Dendritic cell treated with granulocyte-macrophage colony-stimulating factor and Interleukin-4, amounts not matched to agents 40 ng/mL and 50 ng/mL, for 4 days (primary cell): ENCODE measurements at regions of chr15 and their contacts with region 1.

Region 1: DNA sequence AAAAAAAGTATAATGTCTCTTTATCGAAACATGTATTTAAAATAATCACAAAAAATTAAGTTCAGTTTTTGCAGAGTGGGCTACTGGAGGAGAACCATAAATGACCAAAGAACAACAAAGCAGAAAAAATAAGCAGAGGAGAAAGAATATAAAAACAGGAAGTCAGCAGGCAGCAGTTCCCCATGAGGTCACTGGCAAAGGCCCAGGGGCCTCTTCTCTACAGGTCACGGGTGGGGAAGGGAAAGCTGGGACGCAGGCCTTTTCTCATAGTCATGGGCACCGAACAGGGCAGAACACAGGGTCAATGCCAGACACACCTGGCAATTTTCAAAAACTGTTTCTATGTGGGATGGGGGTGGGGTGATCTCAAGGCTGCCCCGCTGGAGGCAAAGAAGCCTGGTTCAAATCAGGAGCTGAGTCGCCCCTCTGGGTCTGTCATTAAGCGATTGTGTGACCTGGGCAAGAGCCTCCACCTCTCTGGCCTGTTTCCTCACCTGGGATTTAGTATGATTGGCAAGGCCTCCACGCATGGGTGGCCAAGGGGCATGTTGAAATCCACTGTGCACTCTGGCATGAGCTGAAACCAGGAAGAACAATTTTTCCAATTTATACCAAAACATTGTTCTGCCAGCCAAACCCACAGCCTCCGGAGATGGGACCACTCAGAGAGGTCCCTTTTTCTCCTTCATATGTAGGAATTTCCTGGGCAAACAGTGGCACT is 43.8 kb upstream of the UACA start:
- H3K4me3 Mint-ChIP-seq: no peak overlapping the region
- H3K27ac Mint-ChIP-seq: peak overlapping the region; percentile 20
- H3K4me1 Mint-ChIP-seq: peaks cover 19% of the 10 kb centered on the region
- H3K27me3 Mint-ChIP-seq: no peaks in the 10 kb centered on the region

Region 2: GRCh38 chr15:69475769-69476358 is 1331.3 kb before region 1 on chr15:
- intact Hi-C with region 1: loop called (anchors 5 kb)
- H3K4me3 Mint-ChIP-seq: no peak overlapping the region
- H3K27ac Mint-ChIP-seq: no peak overlapping the region
- H3K4me1 Mint-ChIP-seq: peaks cover 2% of the 10 kb centered on the region
- H3K27me3 Mint-ChIP-seq: peaks cover 21% of the 10 kb centered on the region

Region 3: GRCh38 chr15:70763120-70763878 is 43.9 kb before region 1 on chr15 and contains the start of gene UACA:
- intact Hi-C with region 1: loop called (anchors 5 kb)
- H3K4me3 Mint-ChIP-seq: peak within 1 kb of the TSS; percentile 94
- H3K27ac Mint-ChIP-seq: peak within 1 kb of the TSS; percentile 78
- H3K4me1 Mint-ChIP-seq: peaks cover 24% of the 10 kb centered on the region
- H3K27me3 Mint-ChIP-seq: peaks cover 37% of the 10 kb centered on the region

Region 4: GRCh38 chr15:70845602-70846360 is 38.6 kb after region 1 on chr15:
- intact Hi-C with region 1: no loop called
- H3K4me3 Mint-ChIP-seq: no peak overlapping the region
- H3K27ac Mint-ChIP-seq: no peak overlapping the region
- H3K4me1 Mint-ChIP-seq: no peaks in the 10 kb centered on the region
- H3K27me3 Mint-ChIP-seq: peaks cover 32% of the 10 kb centered on the region